ENCODE measurements at regions of chr5 and their contacts with region 1.

Region 1: DNA sequence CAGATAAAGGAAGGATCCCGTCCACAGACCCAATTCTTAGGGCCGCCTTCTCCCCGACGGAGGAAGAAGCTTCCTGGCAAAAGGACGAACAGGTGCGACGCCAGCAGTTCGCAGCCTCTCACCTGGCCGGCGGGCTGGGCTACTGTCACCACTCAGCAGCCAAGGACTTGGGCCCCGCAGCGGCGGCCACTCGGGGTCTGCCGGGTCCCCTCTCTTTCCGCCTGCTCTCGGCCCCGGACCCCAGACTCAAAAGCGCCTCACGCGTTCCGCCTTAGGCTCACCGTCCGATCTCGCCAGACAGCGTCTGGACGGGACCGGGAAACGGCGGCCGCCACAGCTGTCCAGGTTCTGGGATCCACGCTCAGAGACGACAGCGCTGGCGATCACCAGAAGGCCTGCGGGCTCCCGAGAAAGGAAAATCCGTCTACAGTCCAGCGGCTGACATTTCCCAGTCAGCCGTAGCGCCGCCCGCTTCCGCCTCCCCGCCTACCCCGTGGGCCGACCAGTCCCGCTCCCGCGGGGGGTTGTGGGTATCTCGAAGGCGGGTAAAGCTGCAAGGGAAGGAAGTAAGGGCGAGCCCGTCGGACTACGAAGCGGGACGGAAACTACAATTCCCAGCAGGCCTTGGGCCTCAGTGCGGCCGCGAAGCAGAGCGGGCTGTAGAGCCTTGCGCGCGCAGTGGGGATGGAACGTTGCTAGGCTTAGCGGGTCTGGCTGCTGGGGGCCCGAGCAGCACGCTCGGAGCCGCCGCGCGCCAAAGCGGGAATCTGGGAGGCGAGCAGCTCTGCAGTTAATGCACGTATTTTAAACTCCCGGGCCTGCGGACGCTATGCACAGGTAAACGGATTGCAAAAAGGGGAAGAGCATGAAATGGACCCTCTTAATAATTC is at the starts of genes LMBRD2 and SKP2:
- DNase-seq: peak; percentile 94 to 99 (median 96)
- ATAC-seq: peak; percentile 95
- H3K4me3 ChIP-seq: peak within 1 kb of the TSS; percentile 82 to 94
- H3K4me3 Mint-ChIP-seq: peak within 1 kb of the TSS; percentile 92
- H3K27ac ChIP-seq: peak within 1 kb of the TSS; percentile 79 to 84
- H3K27ac Mint-ChIP-seq: peak within 1 kb of the TSS; percentile 91
- H3K4me1 ChIP-seq: peaks cover 34% of the 10 kb centered on the region
- H3K4me1 Mint-ChIP-seq: peaks cover 70% of the 10 kb centered on the region
- H3K27me3 ChIP-seq: no peaks in the 10 kb centered on the region
- H3K27me3 Mint-ChIP-seq: no peaks in the 10 kb centered on the region
- CTCF ChIP-seq: no peak
- total RNA-seq, gene LMBRD2: 2.2 to 2.4 TPM
- total RNA-seq, gene SKP2: 5.5 to 6.1 TPM

Region 2: DNA sequence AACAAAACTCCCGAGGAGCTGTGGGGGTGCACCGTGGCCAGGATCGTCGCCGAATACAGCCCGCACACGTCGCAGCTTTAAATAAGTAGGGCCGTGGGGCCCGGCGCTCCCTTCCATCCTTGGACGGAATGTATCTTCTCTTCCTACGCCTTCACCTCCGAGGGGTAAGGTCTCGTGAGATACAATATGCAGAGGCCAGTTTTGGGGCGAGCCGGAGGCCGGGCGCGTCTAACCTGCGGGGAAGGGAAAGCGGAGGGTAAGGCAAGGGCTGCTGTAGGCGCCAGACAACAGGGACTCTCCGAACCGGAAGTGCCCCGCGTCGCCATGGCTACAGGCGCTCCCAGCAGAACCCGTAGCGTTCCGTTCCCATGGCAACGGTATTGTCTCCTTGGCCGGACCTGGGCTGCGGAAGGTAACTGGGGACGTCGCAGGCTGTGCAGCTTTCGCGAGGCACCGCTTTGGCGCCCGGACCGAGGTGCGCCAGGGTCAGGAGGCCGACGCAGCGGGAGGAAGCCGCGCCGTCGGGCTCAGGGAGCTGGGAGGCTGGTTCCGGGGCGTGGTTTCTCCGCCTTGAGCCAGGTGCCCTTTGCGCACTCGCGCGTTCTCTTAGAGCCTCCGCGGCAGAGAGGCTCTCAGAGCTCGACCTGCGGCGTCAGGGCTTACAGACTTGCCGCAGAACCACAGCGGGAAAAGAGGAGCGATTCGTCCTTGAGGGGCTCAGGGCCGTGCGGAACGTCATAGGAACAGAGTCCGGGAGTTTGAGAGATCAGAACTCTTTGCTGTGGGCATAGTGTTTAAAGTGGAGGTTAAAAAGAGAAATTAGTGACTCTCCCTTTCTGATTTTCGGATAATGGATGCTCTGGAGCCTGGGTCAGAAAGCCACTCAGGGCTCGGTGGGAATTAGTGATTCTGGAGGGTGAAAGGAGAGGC is 1312.6 kb before region 1 on chr5 and contains the start of gene TTC23L:
- CTCF ChIA-PET with region 1: no interaction called
- POLR2A ChIA-PET with region 1: no interaction called
- intact Hi-C with region 1: loop called in 1 of 2 experiments (anchors 5 kb)
- DNase-seq: peak; percentile 77 to 97 (median 91)
- ATAC-seq: peak; percentile 90
- H3K4me3 ChIP-seq: peak within 1 kb of the TSS; percentile 73 to 74
- H3K4me3 Mint-ChIP-seq: peak within 1 kb of the TSS; percentile 95
- H3K27ac ChIP-seq: peak within 1 kb of the TSS; percentile 57 to 80
- H3K27ac Mint-ChIP-seq: peak within 1 kb of the TSS; percentile 96
- H3K4me1 ChIP-seq: peaks cover 3% of the 10 kb centered on the region
- H3K4me1 Mint-ChIP-seq: peaks cover 10% of the 10 kb centered on the region
- H3K27me3 ChIP-seq: peaks cover 0 to 3% of the 10 kb centered on the region in 2 experiments
- H3K27me3 Mint-ChIP-seq: no peaks in the 10 kb centered on the region
- CTCF ChIP-seq: no peak
- total RNA-seq, gene TTC23L: not detected

Region 3: DNA sequence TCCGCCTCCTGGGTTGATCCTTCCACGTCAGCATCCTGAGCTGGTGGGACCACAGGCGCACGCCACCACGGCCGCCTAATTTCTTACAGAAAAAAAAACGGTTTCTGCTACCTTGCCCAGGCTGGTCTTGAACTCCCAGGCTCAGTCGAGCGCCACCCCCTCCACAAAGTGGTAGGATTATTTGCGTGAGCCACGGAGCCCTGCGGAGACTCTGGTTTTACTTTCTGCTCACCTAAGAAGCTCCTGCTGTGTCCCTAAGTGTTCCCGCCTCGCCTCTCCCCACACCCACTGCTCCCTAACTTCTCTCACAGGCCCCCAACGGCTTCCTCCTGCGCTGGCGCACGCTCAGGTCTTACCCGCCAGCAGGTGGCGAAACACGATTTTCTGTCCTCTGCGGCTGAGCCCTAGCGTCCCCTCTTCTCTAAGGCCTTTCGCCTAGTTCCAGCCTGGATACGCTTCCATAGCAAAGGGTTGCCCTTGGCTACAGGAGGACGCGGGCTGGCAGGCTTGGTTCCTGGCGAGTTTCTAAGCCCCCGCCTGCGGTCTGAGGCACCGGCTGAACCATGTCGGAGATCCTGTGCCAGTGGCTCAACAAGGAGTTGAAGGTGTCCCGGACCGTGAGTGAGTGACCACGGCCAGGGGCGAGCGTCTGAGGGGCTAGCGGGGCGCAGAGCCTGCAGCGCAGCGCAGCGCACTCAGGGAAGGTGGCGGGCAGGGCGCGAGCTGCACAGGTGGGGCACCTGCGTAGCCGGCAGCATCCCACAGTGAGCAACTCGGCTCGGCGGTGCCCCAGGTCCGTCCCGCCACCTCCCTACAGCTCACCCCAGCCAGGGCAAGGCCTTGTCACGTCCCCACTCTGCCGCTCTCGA is 534.0 kb before region 1 on chr5 and contains the start of gene SPEF2:
- CTCF ChIA-PET with region 1: no interaction called
- POLR2A ChIA-PET with region 1: interaction called, 3 read pairs
- intact Hi-C with region 1: loop called (anchors 5 to 10 kb)
- DNase-seq: peak; percentile 54 to 90 (median 80)
- ATAC-seq: peak; percentile 84
- H3K4me3 ChIP-seq: peak within 1 kb of the TSS; percentile 84 to 88
- H3K4me3 Mint-ChIP-seq: peak within 1 kb of the TSS; percentile 91
- H3K27ac ChIP-seq: peak within 1 kb of the TSS; percentile 60 to 63
- H3K27ac Mint-ChIP-seq: peak within 1 kb of the TSS; percentile 95
- H3K4me1 ChIP-seq: peaks cover 16% of the 10 kb centered on the region
- H3K4me1 Mint-ChIP-seq: peaks cover 31% of the 10 kb centered on the region
- H3K27me3 ChIP-seq: no peaks in the 10 kb centered on the region
- H3K27me3 Mint-ChIP-seq: no peaks in the 10 kb centered on the region
- CTCF ChIP-seq: peak; percentile 78
- total RNA-seq, gene SPEF2: 3.5 to 4.7 TPM

Region 4: GRCh38 chr5:35626108-35626507 is 525.6 kb before region 1 on chr5:
- CTCF ChIA-PET with region 1: no interaction called
- POLR2A ChIA-PET with region 1: no interaction called
- intact Hi-C with region 1: loop called in 1 of 2 experiments (anchors 5 kb)
- DNase-seq: no peak
- ATAC-seq: no peak
- H3K4me3 ChIP-seq: no peak overlapping the region
- H3K4me3 Mint-ChIP-seq: no peak overlapping the region
- H3K27ac ChIP-seq: no peak overlapping the region
- H3K27ac Mint-ChIP-seq: no peak overlapping the region
- H3K4me1 ChIP-seq: no peaks in the 10 kb centered on the region
- H3K4me1 Mint-ChIP-seq: peaks cover 4% of the 10 kb centered on the region
- H3K27me3 ChIP-seq: no peaks in the 10 kb centered on the region
- H3K27me3 Mint-ChIP-seq: no peaks in the 10 kb centered on the region
- CTCF ChIP-seq: no peak

Region 5: DNA sequence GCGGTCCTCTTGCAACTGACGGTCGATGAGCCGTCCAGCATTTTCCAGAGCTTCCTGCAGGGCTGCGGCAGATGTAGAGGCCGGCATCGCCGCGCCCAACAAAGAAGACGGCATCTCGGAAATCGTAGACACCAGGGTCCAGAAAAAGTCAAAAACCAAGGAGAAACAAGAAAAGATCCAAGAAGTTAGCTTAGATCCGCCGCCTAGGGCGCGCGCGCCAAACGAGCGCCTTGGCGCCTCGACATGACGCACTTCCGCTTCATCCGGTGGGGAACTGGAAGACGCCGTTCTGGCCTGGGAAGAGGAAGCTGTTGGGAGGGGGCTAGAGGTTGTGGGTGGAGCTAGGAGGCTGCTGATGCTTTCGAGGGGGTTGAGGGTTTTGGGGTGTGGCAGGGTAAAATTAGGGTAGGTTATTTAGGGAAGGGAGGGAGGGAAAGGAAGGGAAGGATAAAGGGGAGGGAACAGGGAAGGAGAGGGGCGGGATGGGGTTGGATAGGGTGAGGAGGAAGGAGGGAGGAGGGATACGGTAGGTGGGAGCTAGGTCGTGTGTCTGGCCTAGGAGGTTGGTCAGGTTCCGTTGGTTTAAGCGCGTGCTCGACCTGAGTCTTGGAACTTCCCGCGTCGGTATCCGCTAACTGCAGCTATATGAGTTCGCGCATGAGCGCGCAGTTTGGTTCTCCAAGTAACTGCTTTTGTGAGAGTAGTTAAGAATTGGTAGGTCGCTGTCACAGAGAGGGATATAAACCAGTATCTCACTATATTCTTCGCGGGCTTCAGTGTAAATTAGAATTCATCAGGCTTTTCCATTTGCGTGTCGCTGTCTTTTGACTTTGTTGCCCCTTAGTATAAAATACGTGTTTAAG is 1219.4 kb after region 1 on chr5 and contains the start of gene NUP155:
- CTCF ChIA-PET with region 1: no interaction called
- POLR2A ChIA-PET with region 1: interaction called, 3 read pairs
- intact Hi-C with region 1: loop called (anchors 1 to 5 kb)
- DNase-seq: peak; percentile 71 to 96 (median 88)
- ATAC-seq: peak; percentile 93
- H3K4me3 ChIP-seq: peak within 1 kb of the TSS; percentile 92 to 95
- H3K4me3 Mint-ChIP-seq: peak within 1 kb of the TSS; percentile 97
- H3K27ac ChIP-seq: peak within 1 kb of the TSS; percentile 88 to 93
- H3K27ac Mint-ChIP-seq: peak within 1 kb of the TSS; percentile 97
- H3K4me1 ChIP-seq: peaks cover 18% of the 10 kb centered on the region
- H3K4me1 Mint-ChIP-seq: peaks cover 32% of the 10 kb centered on the region
- H3K27me3 ChIP-seq: no peaks in the 10 kb centered on the region
- H3K27me3 Mint-ChIP-seq: no peaks in the 10 kb centered on the region
- CTCF ChIP-seq: no peak
- total RNA-seq, gene NUP155: 22.9 to 27.4 TPM